ENCODE measurements at regions of chrX and their contacts with region 1.

Region 1: GRCh38 chrX:45077748-45078424 is 122.8 kb downstream of the DIPK2B start:
- DNase-seq: no peak
- ATAC-seq: no peak
- H3K4me3 ChIP-seq: no peak overlapping the region
- H3K27ac ChIP-seq: peak overlapping the region in 1 of 10 donors; percentile 49
- H3K4me1 ChIP-seq: peaks cover 0 to 28% (median 7%) of the 10 kb centered on the region in 9 donors
- H3K27me3 ChIP-seq: no peaks in the 10 kb centered on the region
- CTCF ChIP-seq: no peak

Region 2: GRCh38 chrX:45186643-45187026 is 108.7 kb after region 1 on chrX:
- intact Hi-C with region 1: loop called in 2 of 10 experiments (anchors 1 to 5 kb)
- DNase-seq: no peak
- ATAC-seq: peak in 2 of 8 donors; percentile 10
- H3K4me3 ChIP-seq: peak overlapping the region in 7 of 10 donors; percentile 10 to 53 (median 46)
- H3K27ac ChIP-seq: peak overlapping the region in 2 of 10 donors; percentile 16 to 52
- H3K4me1 ChIP-seq: peaks cover 0 to 21% (median 8%) of the 10 kb centered on the region in 9 donors
- H3K27me3 ChIP-seq: peaks cover 0 to 33% (median 0%) of the 10 kb centered on the region in 7 donors
- CTCF ChIP-seq: no peak